ENCODE measurements at regions of chr3 and their contacts with region 1.

Region 1: DNA sequence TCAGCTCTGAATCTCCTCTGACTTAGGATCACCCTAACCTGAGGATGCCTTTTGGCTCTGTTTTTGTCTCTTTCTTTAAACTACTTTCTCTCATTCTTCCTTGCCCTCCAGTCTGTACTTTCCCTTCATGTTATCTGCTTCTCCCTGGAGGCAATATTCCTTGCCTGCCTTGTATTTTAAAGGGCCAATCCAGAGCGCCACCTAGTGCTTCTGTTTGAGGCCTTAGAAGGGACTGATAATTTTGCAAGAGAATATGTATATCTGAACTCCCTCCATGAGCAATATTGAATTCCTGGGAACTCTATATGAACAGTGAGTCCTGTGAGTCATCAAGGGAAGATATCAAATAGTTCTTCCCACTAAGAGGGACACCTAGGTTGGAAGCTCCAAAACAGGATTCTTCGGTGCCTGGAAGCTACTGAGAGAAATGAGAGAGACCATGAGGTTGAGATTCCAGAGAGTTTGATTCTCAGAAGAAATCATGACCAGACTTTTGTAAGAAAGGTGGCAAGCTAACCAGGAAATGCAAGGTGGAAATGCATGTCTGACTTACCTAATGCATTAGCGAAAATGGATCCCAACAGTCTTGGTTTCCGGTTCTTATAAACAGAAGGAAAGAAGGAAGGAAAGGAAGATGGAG is 203.8 kb upstream of the CD96 start:
- DNase-seq: peak; percentile 62
- ATAC-seq: peak; percentile 96
- H3K4me3 ChIP-seq: no peak overlapping the region
- H3K27ac ChIP-seq: no peak overlapping the region
- H3K4me1 ChIP-seq: no peaks in the 10 kb centered on the region
- H3K27me3 ChIP-seq: no peaks in the 10 kb centered on the region
- CTCF ChIP-seq: peak; percentile 79
- EP300 ChIP-seq: no peak
- POLR2A ChIP-seq: no peak
- RAD21 ChIP-seq: peak; percentile 69; the same call in 1 of the 2 replicates

Region 2: DNA sequence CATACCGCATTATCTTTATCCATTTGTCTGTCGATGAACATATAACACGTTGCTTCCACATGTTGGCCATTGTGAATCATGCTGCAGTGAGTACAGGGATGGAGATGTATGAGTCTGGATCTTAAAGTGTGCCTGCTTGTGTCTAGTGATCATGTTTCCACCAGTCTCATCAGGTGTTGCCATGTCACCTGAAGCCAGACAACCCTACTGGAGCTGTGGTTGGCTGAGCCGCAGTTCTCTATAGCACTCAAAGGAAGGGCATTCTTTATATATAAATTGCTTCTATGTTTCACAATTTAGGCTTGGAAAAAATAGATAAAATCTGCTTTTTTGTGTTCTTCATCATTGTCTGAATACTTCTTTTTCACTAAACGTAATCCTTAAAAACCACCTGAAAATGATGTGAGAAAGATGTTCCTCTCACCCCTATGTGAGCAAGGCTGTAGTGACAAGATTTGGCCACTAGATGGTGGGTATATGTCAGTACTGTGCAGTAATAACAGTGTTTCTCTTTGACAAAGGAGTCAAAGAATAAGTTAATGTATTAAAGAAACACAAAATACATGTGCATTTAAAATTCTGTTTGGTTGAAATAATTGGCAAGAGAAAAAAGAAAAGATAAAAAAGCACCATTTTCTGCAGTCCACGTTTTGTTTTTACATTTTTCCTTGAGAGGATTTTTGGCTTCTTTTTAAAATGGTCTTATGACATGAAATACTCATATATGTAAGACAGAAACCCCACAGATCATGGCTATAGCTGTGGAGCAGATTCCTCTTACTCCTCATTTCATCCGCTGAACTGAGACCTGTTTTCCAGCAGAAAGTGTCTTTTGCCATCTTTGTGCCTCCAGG is 1606.3 kb before region 1 on chr3:
- CTCF ChIA-PET with region 1: no interaction called
- POLR2A ChIA-PET with region 1: no interaction called
- in situ Hi-C with region 1: no loop called
- intact Hi-C with region 1: loop called (anchors 1 kb)
- DNase-seq: peak; percentile 27
- ATAC-seq: peak; percentile 89
- H3K4me3 ChIP-seq: no peak overlapping the region
- H3K27ac ChIP-seq: no peak overlapping the region
- H3K4me1 ChIP-seq: no peaks in the 10 kb centered on the region
- H3K27me3 ChIP-seq: no peaks in the 10 kb centered on the region
- CTCF ChIP-seq: peak; percentile 73
- EP300 ChIP-seq: no peak
- POLR2A ChIP-seq: no peak
- RAD21 ChIP-seq: 0 out of 2 replicates have a peak, but pooled peaks have one; percentile 17

Region 3: GRCh38 chr3:110314512-110315114 is 1023.6 kb before region 1 on chr3:
- CTCF ChIA-PET with region 1: no interaction called
- POLR2A ChIA-PET with region 1: no interaction called
- in situ Hi-C with region 1: no loop called
- intact Hi-C with region 1: loop called (anchors 1 kb)
- DNase-seq: peak; percentile 64
- ATAC-seq: peak; percentile 78
- H3K4me3 ChIP-seq: no peak overlapping the region
- H3K27ac ChIP-seq: no peak overlapping the region
- H3K4me1 ChIP-seq: no peaks in the 10 kb centered on the region
- H3K27me3 ChIP-seq: no peaks in the 10 kb centered on the region
- CTCF ChIP-seq: peak; percentile 77
- EP300 ChIP-seq: no peak
- POLR2A ChIP-seq: no peak
- RAD21 ChIP-seq: no peak

Region 4: DNA sequence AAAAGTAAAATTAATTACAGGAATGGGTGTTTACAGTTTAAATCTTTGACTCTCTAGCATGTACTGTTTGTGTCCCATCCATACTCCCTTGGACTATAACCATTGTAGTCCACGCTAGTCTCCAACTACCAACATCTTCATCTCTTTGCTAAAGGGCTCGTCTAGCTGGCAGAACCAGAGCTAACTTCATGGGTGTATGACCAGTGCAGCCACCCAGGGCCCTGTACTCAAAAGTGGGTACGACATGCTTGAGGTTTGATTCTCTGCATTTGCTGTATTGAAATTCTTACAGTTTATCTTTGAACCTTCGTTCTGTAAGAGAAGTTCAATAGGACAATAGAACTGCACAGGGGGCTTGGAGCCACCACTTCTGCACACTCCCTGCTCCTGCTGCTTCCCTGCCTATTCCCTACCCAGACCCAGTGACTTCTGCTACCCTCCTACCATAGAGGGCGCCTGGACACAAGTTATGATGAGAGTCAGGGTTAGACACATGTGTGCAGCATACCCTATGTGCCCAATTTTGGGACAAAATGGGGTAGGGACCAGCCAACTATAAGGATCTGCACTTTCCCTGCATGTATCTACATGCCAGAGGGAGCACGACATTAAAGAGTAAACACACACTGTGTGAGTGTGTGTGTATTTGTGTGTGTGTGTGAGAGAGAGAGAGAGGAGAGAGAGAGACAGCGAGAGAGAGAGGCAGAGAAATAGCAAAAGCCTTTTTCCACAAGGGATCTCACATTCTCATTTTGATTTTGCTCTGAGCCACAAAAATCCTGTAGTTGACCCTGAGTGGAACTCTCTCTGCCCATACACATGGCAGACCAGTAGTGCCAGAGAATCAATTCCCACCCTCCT is 325.6 kb before region 1 on chr3:
- CTCF ChIA-PET with region 1: no interaction called
- POLR2A ChIA-PET with region 1: no interaction called
- in situ Hi-C with region 1: loop called (anchors 10 kb)
- intact Hi-C with region 1: no loop called
- DNase-seq: peak; percentile 53
- ATAC-seq: peak; percentile 100
- H3K4me3 ChIP-seq: no peak overlapping the region
- H3K27ac ChIP-seq: no peak overlapping the region
- H3K4me1 ChIP-seq: 0 out of 2 replicates have a peak, but pooled peaks cover 5% of the 10 kb centered on the region
- H3K27me3 ChIP-seq: no peaks in the 10 kb centered on the region; a peak in 1 of 5 replicates
- CTCF ChIP-seq: peak; percentile 83
- EP300 ChIP-seq: no peak
- POLR2A ChIP-seq: no peak
- RAD21 ChIP-seq: 0 out of 2 replicates have a peak, but pooled peaks have one; percentile 27

Region 5: DNA sequence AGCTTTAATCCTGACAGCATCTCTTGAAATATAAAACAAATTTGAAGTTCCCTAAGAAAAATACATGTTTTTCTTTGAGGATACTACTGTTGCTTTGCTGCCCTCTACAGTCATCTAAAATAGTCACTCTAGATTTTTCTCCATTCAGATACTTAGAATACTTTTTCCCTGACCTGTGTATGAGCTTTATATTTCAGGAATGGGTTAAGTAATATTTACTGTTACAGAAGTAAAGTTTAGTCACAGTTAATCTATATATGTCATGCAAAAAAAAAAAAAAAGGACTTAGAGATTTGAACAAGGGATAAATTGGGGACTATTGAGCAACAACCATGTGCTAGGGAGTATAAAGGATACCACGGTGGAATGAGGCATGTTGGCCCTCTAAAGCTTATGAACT is 257.8 kb before region 1 on chr3:
- CTCF ChIA-PET with region 1: no interaction called
- POLR2A ChIA-PET with region 1: no interaction called
- in situ Hi-C with region 1: no loop called
- intact Hi-C with region 1: loop called (anchors 5 kb)
- DNase-seq: peak; percentile 39
- ATAC-seq: peak; percentile 63
- H3K4me3 ChIP-seq: no peak overlapping the region
- H3K27ac ChIP-seq: no peak overlapping the region
- H3K4me1 ChIP-seq: peaks cover 34% of the 10 kb centered on the region
- H3K27me3 ChIP-seq: no peaks in the 10 kb centered on the region
- CTCF ChIP-seq: peak; percentile 47
- EP300 ChIP-seq: no peak
- POLR2A ChIP-seq: no peak
- RAD21 ChIP-seq: no peak

Region 6: GRCh38 chr3:111299068-111299672 is 39.0 kb before region 1 on chr3:
- CTCF ChIA-PET with region 1: no interaction called
- POLR2A ChIA-PET with region 1: no interaction called
- in situ Hi-C with region 1: no loop called
- intact Hi-C with region 1: loop called (anchors 1 kb)
- DNase-seq: no peak
- ATAC-seq: no peak; the same call in 2 of the 3 replicates
- H3K4me3 ChIP-seq: no peak overlapping the region
- H3K27ac ChIP-seq: no peak overlapping the region
- H3K4me1 ChIP-seq: no peaks in the 10 kb centered on the region
- H3K27me3 ChIP-seq: no peaks in the 10 kb centered on the region; a peak in 1 of 5 replicates
- CTCF ChIP-seq: peak; percentile 20; the same call in 1 of the 2 replicates
- EP300 ChIP-seq: no peak
- POLR2A ChIP-seq: no peak
- RAD21 ChIP-seq: no peak

Region 7: DNA sequence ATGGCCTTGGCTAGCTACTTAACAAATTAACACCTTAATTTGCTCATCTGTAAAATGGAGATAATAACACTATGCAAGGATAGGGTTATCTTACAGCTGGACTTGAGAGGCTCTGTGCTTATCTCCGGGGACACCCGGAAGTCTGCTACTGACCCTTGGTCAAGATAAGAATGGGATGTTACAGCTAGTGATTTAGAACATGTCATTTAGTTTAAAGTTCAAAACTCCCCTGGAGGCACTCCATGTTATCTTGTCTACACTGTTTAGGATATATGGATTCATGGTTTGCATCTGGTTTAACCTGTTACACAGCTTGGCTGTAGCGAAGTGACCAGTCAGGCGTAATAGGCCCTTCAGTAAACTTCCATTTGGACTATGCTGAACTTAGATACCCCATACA is 47.9 kb after region 1 on chr3:
- CTCF ChIA-PET with region 1: no interaction called
- POLR2A ChIA-PET with region 1: no interaction called
- in situ Hi-C with region 1: no loop called
- intact Hi-C with region 1: no loop called
- DNase-seq: no peak
- ATAC-seq: no peak
- H3K4me3 ChIP-seq: no peak overlapping the region
- H3K27ac ChIP-seq: no peak overlapping the region
- H3K4me1 ChIP-seq: no peaks in the 10 kb centered on the region
- H3K27me3 ChIP-seq: no peaks in the 10 kb centered on the region; a peak in 1 of 5 replicates
- CTCF ChIP-seq: no peak
- EP300 ChIP-seq: no peak
- POLR2A ChIP-seq: no peak
- RAD21 ChIP-seq: no peak

Measured in HepG2 (cell line).